Heart right ventricle (tissue), 16 donors: ENCODE measurements at regions of chr10 and their contacts with region 1.

Region 1: DNA sequence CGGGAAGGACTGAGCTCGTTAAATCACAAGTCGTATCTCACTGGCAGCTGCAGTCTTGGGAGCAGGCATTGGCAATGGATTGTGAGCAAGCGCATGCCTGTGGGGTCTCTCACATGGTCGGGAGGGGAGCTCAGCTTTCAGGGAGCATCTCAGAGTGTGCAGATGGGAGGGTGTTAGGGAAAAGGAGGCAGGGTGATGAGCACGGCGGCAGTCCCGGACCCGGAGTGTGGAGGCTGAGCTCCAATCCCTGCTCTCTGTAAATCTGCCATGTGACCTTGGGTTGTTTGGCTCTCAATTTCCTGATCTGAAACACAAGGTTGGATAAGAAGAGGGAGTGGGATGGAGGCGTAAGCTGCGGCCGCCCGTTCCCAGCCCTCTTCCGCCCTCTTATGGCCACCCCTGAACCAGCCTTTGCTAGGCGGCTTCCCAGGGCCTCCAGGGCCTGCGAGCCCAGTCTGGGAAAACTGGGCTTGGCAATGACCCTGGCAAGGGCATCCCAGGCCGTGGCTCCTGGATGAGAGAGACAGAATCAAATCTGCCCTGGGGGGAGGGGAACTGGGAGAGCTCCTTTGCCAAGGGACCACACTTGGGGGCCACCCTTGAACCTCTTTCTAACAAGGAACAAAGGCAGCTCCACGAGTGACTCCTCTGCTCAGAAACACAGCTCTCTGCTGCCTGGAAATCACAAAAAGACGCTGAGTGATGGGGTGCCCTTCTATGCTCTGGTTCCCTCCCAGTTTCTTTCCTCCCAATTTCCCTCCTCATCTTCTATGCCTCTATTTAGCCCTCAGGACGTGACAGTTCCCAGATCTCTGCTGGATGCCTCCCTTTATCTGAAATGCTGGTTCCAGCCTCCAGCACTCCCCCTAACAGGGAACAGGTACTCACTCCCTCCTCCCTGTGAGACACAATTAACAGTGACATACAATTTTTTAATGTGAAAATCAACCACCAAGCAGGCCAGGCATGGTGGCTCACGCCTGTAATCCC is 41.7 kb upstream of the LOXL4 start:
- DNase-seq: peak; percentile 70 to 76
- ATAC-seq: peak; percentile 93 to 97 (median 95)
- H3K4me3 ChIP-seq: peak overlapping the region in 3 of 10 donors; percentile 4 to 18 (median 8)
- H3K27ac ChIP-seq: peak overlapping the region in 2 of 10 donors; percentile 49
- H3K4me1 ChIP-seq: peaks cover 0 to 21% (median 16%) of the 10 kb centered on the region in 9 donors
- H3K27me3 ChIP-seq: peaks cover 0 to 23% (median 0%) of the 10 kb centered on the region in 7 donors
- CTCF ChIP-seq: peak; percentile 65 to 93 (median 85)

Region 2: DNA sequence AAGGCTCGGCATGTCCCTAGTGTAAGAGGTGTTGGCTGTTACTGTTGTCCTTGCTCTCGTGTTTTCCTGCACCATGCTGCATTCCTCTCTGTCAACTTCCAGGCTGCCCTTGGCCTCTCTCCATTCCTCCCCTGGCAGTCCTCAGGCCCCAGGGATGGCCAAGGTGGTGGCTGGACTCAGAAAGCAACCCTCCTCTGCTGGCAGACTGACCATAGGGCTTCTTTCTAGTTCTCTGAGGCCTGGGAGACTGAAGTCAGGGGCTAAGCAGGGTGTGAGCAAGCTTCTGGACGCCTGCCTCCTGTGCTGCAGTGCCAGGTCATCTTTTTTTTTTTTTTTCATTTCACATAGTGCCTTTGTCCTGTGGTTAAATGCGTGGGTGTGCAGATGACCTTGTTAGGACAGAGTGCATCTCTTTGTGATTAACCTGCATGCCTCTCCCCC is 388.1 kb before region 1 on chr10:
- intact Hi-C with region 1: loop called in 4 of 10 experiments (anchors 5 to 10 kb)
- DNase-seq: peak; percentile 39 to 55
- ATAC-seq: peak; percentile 36 to 88 (median 82)
- H3K4me3 ChIP-seq: no peak overlapping the region
- H3K27ac ChIP-seq: peak overlapping the region in 7 of 10 donors; percentile 25 to 74 (median 55)
- H3K4me1 ChIP-seq: peaks cover 0 to 26% (median 13%) of the 10 kb centered on the region in 9 donors
- H3K27me3 ChIP-seq: peaks cover 0 to 25% (median 0%) of the 10 kb centered on the region in 7 donors
- CTCF ChIP-seq: no peak

Region 3: DNA sequence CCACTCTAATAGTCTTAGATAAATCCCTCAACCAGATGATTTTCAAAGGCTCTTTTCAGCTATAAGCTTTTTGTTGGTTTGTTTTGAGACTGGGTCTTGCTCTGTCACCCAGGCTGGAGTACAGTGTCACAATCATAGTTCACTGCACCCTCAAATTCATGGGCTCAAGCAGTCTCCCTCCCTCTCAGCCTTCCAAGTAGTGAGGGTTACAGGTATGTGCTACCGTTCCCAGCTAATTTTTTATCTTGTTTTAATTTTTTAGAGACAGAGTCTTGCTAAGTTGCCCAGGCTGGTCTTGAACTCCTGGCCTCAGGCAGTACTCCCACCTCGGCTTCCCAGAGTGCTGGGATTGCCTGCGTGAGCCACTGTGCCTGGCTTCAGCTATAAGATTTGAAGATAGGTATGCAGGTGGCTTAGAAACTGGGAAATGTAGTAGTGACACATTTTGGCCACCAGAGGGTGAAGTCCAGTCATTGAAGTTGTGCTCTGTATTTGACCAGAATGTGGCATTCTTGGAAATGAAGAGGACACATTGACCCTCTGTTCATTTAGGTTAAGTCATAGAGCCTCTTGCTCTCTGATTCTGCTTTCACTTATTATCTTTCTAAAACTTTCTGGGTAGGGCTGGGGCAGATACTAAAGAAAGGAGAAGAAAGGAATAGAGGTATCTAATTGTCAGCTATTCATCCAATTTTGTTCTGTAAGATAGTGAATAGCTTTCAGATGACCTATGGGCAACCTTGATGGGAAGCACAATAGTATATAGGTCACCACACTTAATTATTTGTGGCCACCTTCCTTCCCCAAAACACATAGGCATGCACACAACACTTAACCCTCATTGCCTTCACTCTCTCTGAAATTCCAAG is 139.2 kb before region 1 on chr10:
- intact Hi-C with region 1: loop called in 9 of 10 experiments (anchors 1 to 10 kb)
- DNase-seq: peak in 1 of 2 donors; percentile 16
- ATAC-seq: peak in 7 of 8 donors; percentile 35 to 66 (median 53)
- H3K4me3 ChIP-seq: no peak overlapping the region
- H3K27ac ChIP-seq: no peak overlapping the region
- H3K4me1 ChIP-seq: peaks cover 0 to 30% (median 17%) of the 10 kb centered on the region in 9 donors
- H3K27me3 ChIP-seq: no peaks in the 10 kb centered on the region
- CTCF ChIP-seq: peak; percentile 47 to 86 (median 74)

Region 4: DNA sequence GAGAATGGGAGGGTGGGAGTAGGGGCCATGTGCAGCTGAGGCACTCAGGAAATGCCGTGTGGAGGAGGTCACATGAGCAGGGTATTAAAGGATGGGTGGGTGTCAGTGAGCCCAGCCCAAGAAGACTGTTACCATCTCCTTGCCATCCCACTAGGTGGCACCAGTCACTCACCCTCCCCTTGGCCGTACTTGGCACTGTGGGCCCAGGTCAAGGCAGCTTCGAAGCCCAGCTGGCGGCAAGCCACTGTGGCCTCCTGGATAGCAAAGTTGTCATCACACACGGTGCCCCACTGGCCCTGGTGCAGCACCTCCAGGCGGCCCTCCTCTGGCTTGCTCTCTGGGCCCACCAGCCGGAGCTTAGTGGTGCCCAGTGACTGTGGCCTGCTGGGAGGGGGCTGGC is 47.1 kb before region 1 on chr10:
- intact Hi-C with region 1: loop called in 9 of 10 experiments (anchors 1 to 5 kb)
- DNase-seq: peak; percentile 60 to 74
- ATAC-seq: peak; percentile 47 to 83 (median 75)
- H3K4me3 ChIP-seq: no peak overlapping the region
- H3K27ac ChIP-seq: no peak overlapping the region
- H3K4me1 ChIP-seq: peaks cover 0 to 14% (median 8%) of the 10 kb centered on the region in 9 donors
- H3K27me3 ChIP-seq: peaks cover 0 to 16% (median 0%) of the 10 kb centered on the region in 7 donors
- CTCF ChIP-seq: peak; percentile 33 to 67 (median 62)

Region 5: GRCh38 chr10:98274562-98274961 is 35.1 kb before region 1 on chr10:
- intact Hi-C with region 1: loop called in 2 of 10 experiments (anchors 1 to 5 kb)
- DNase-seq: no peak
- ATAC-seq: no peak
- H3K4me3 ChIP-seq: no peak overlapping the region
- H3K27ac ChIP-seq: no peak overlapping the region
- H3K4me1 ChIP-seq: peaks cover 7 to 14% (median 10%) of the 10 kb centered on the region in 9 donors
- H3K27me3 ChIP-seq: peaks cover 0 to 2% (median 0%) of the 10 kb centered on the region in 7 donors
- CTCF ChIP-seq: no peak

Region 6: GRCh38 chr10:98664331-98665042 is 354.8 kb after region 1 on chr10:
- intact Hi-C with region 1: no loop called
- DNase-seq: no peak
- ATAC-seq: no peak
- H3K4me3 ChIP-seq: no peak overlapping the region
- H3K27ac ChIP-seq: no peak overlapping the region
- H3K4me1 ChIP-seq: no peaks in the 10 kb centered on the region
- H3K27me3 ChIP-seq: peaks cover 0 to 4% (median 0%) of the 10 kb centered on the region in 7 donors
- CTCF ChIP-seq: peak in 8 of 9 donors; percentile 7 to 65 (median 48)